CD8-positive, alpha-beta T cell (primary cell): ENCODE measurements at regions of chr7 and their contacts with region 1.

Region 1: GRCh38 chr7:106153891-106154449 is 41.9 kb upstream of the SYPL1 start:
- DNase-seq: peak; percentile 45 to 86 (median 72)
- ATAC-seq: peak; percentile 96
- H3K4me3 ChIP-seq: no peak overlapping the region
- H3K4me3 Mint-ChIP-seq: peak overlapping the region; percentile 48
- H3K27ac ChIP-seq: no peak overlapping the region
- H3K27ac Mint-ChIP-seq: no peak overlapping the region
- H3K4me1 ChIP-seq: no peaks in the 10 kb centered on the region
- H3K4me1 Mint-ChIP-seq: peaks cover 4% of the 10 kb centered on the region
- H3K27me3 ChIP-seq: no peaks in the 10 kb centered on the region
- H3K27me3 Mint-ChIP-seq: peaks cover 5% of the 10 kb centered on the region
- CTCF ChIP-seq: peak; percentile 93

Region 2: GRCh38 chr7:105924945-105925344 is 229.0 kb before region 1 on chr7:
- CTCF ChIA-PET with region 1: interaction called, 11 read pairs
- POLR2A ChIA-PET with region 1: no interaction called
- intact Hi-C with region 1: no loop called
- DNase-seq: peak in 3 of 9 experiments; percentile 16 to 73 (median 51)
- ATAC-seq: peak; percentile 86
- H3K4me3 ChIP-seq: no peak overlapping the region
- H3K4me3 Mint-ChIP-seq: peak overlapping the region; percentile 38
- H3K27ac ChIP-seq: peak overlapping the region in 1 of 2 experiments; percentile 40
- H3K27ac Mint-ChIP-seq: peak overlapping the region; percentile 78
- H3K4me1 ChIP-seq: peaks cover 21% of the 10 kb centered on the region
- H3K4me1 Mint-ChIP-seq: peaks cover 35% of the 10 kb centered on the region
- H3K27me3 ChIP-seq: no peaks in the 10 kb centered on the region
- H3K27me3 Mint-ChIP-seq: no peaks in the 10 kb centered on the region
- CTCF ChIP-seq: no peak

Region 3: DNA sequence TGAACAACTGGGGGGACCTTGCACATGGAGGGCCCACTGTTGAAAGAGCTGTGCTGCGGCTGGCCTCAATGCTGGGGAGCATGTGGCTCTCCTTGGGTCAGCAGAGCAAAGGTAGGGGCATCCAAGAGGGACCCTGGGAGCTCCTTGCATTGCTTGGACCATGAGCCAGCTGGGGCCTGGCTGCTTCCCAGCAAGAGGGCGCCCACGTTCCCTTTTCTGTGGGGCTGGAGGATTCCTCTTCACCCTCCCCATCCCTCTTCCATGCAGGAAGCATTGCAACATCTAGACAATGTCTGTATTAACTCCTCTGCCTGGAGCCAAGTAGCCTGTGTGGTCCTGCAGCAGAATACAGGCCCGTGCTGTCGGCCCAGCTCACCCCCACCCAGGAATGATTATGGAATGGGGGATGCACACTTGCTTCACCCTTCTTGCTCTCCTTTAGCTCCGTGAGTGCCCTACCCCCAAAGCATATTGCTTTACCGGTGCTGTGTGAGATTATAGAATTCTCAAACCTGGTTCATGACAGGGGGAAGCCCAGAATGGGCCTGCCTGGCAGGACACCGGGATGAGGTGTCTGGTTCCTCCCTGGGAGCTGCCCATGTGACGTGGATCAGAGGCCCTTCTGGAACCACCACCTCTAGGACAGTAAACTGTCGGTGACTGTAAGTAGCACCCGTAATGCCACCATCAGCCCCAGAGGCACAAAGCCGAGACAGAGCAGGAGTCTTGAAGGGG is 103.8 kb before region 1 on chr7:
- CTCF ChIA-PET with region 1: interaction called, 310 read pairs
- POLR2A ChIA-PET with region 1: no interaction called
- intact Hi-C with region 1: no loop called
- DNase-seq: no peak
- ATAC-seq: no peak
- H3K4me3 ChIP-seq: no peak overlapping the region
- H3K4me3 Mint-ChIP-seq: no peak overlapping the region
- H3K27ac ChIP-seq: no peak overlapping the region
- H3K27ac Mint-ChIP-seq: no peak overlapping the region
- H3K4me1 ChIP-seq: no peaks in the 10 kb centered on the region
- H3K4me1 Mint-ChIP-seq: no peaks in the 10 kb centered on the region
- H3K27me3 ChIP-seq: no peaks in the 10 kb centered on the region
- H3K27me3 Mint-ChIP-seq: peaks cover 2% of the 10 kb centered on the region
- CTCF ChIP-seq: no peak

Region 4: DNA sequence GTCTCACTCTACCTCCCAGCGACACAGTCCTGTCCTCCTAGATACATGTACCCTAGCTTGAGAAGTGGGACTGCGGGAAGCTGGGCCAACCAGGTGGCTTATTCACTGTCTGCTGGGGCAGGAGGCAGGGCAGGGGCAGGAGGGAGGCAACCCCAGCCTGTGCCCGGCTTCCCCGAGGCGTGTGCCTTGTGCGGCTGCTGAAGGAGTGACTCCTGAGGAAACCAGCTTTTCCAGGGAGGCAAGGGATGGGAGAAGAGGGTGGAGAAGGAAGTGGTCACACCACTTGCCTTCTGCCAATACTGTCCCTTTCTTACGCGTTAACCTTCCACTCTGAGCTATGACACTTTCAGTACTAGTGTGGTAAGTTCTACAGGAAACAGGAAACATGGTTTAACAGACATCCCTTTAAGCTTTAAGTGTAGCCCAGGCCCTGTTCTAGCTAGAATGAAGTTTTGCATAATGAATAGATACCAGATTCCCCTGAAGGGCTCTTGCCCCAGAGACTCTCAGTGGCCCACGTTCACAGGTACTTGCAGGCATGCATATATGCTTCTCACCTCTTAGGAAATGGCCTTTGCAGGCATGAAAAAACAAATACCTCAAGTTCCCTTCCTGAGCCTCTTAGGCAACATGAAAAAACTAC is 82.5 kb before region 1 on chr7:
- CTCF ChIA-PET with region 1: interaction called, 51 read pairs
- POLR2A ChIA-PET with region 1: no interaction called
- intact Hi-C with region 1: no loop called
- DNase-seq: peak in 8 of 9 experiments; percentile 22 to 81 (median 50)
- ATAC-seq: peak; percentile 92
- H3K4me3 ChIP-seq: peak overlapping the region; percentile 28 to 31
- H3K4me3 Mint-ChIP-seq: peak overlapping the region; percentile 78
- H3K27ac ChIP-seq: peak overlapping the region; percentile 64 to 83
- H3K27ac Mint-ChIP-seq: peak overlapping the region; percentile 97
- H3K4me1 ChIP-seq: peaks cover 37% of the 10 kb centered on the region
- H3K4me1 Mint-ChIP-seq: peaks cover 67% of the 10 kb centered on the region
- H3K27me3 ChIP-seq: no peaks in the 10 kb centered on the region
- H3K27me3 Mint-ChIP-seq: no peaks in the 10 kb centered on the region
- CTCF ChIP-seq: no peak

Region 5: DNA sequence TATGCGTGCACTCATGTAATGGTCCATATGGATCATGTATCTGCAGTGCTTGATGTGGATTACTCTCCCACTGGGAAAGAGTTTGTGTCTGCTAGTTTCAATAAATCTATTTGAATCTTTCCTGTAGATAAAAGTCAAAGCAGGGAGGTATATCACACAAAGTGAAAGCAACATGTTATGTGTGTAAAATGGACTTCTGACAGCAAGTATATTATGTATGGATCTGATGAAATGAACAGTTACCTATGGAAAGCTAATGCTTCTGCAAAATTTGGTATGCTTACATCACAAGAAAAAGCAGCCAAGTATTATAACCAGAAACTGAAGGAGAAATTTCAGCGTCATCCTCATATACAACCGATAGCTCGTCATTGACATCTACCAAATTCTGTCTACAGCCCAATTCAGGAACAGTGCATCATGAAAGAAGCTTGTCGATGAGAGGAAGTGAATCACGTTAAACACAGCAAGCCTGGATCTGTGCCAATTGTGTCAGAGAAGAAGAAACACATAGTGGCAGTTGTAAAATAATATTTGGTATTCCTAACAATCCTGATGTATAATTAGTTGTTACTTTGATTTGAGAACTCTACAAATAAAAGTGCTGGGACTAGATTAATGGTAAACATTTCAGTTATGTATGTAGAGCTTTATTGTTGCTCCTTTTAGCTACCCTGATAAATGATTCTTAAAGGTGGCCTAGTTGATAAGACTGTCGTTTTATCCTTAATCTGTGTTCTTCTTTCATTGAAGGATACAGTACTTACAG is 27.6 kb before region 1 on chr7:
- CTCF ChIA-PET with region 1: interaction called, 20 read pairs
- POLR2A ChIA-PET with region 1: no interaction called
- intact Hi-C with region 1: loop called in 1 of 2 experiments (anchors 1 kb)
- DNase-seq: peak in 8 of 9 experiments; percentile 6 to 63 (median 54)
- ATAC-seq: peak; percentile 89
- H3K4me3 ChIP-seq: no peak overlapping the region
- H3K4me3 Mint-ChIP-seq: peak overlapping the region; percentile 54
- H3K27ac ChIP-seq: no peak overlapping the region
- H3K27ac Mint-ChIP-seq: peak overlapping the region; percentile 8
- H3K4me1 ChIP-seq: peaks cover 10% of the 10 kb centered on the region
- H3K4me1 Mint-ChIP-seq: peaks cover 16% of the 10 kb centered on the region
- H3K27me3 ChIP-seq: no peaks in the 10 kb centered on the region
- H3K27me3 Mint-ChIP-seq: peaks cover 2% of the 10 kb centered on the region
- CTCF ChIP-seq: no peak

Region 6: DNA sequence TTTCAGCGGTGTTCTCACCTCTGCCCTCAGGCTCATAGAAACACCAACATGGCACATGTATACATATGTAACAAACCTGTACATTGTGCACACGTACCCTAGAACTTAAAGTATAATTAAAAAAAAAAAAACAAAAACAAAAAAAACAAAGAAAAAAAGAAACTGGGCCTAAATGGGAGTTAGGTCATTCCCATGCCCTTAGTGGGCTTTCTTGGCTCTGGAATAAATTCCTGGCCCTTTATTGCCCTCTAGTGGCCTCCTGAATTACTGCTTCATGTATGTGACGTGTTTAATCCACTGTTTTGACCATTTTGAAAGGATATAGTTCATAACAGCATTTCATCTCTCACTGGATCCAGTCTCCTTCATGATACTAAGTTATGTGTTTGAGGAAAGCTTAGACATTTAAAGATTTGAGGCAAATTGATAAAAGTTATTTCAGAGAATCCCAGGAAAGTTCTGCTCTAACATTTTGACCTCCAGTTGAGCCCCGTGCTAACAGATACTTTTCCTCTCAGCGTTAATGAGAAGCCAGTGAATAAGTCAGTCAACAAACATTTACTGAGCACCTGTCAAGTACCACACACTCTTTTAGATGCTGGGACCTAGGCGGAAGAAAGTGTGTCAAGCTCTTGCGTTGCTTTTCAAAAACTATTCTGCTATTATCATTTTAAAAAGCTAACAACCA is 12.8 kb after region 1 on chr7:
- CTCF ChIA-PET with region 1: interaction called, 89 read pairs
- POLR2A ChIA-PET with region 1: interaction called, 7 read pairs
- intact Hi-C with region 1: loop called in 1 of 2 experiments (anchors 1 kb)
- DNase-seq: peak in 4 of 9 experiments; percentile 25 to 71 (median 48)
- ATAC-seq: peak; percentile 57
- H3K4me3 ChIP-seq: no peak overlapping the region
- H3K4me3 Mint-ChIP-seq: no peak overlapping the region
- H3K27ac ChIP-seq: no peak overlapping the region
- H3K27ac Mint-ChIP-seq: no peak overlapping the region
- H3K4me1 ChIP-seq: no peaks in the 10 kb centered on the region
- H3K4me1 Mint-ChIP-seq: no peaks in the 10 kb centered on the region
- H3K27me3 ChIP-seq: no peaks in the 10 kb centered on the region
- H3K27me3 Mint-ChIP-seq: peaks cover 3% of the 10 kb centered on the region
- CTCF ChIP-seq: peak; percentile 97